HEK293T (cell line): ENCODE measurements at regions of chr9 and their contacts with region 1.

Region 1: DNA sequence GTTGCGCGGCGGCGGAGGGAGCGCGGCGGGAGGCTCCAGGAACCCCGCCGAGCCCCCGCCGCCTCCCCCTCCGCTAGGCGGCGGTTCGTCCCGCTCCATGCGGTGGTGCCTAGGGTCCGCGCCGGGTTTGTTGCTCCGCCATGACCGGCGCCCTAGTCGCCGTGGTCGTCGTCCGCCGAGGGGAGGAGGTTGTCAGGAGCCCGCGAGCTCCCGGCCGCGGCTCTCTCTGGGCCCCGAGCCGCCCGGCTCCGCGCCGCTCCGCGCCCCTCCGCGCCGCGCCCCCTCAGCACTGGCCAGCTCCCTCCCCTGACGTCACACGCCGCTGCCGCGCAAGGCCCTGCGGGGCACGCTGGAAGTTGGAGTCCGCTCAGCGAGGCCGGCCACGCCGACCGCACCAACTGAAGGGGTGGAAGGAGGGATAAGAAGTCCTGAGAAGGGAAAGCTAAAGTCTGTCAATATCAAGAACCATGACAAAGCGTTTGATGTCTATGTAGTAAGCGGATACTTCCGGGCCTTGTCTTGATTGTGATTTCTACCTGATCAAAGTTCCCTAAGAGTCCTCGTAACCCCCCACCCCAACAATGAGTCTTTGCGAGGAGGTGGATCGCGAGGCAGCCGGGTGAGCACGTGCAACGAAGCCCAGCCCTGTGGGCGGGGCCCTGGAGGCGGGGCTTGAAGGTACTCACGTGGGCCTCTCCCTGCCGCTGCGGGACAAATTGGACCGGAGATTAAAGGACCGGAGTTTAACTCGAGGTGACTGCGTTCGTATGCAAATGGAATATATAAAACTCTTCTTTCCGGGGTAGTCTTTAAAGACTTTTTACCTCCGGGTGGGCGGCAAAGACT is at the start of gene NR6A1:
- DNase-seq: peak; percentile 93

Region 2: GRCh38 chr9:124342776-124343485 is 428.3 kb before region 1 on chr9:
- CTCF ChIA-PET with region 1: no interaction called
- POLR2A ChIA-PET with region 1: no interaction called
- DNase-seq: no peak

Region 3: GRCh38 chr9:124861342-124862229 is 90.3 kb after region 1 on chr9 and contains the starts of genes ARPC5L and RPL35:
- CTCF ChIA-PET with region 1: interaction called, 244 read pairs
- POLR2A ChIA-PET with region 1: interaction called, 17 read pairs
- DNase-seq: peak; percentile 96